Breast epithelium (tissue), 4 donors: ENCODE measurements at regions of chr1 and their contacts with region 1.

Region 1: GRCh38 chr1:174883409-174883808 is 116.3 kb upstream of the CACYBP start:
- DNase-seq: no peak
- H3K4me3 ChIP-seq: no peak overlapping the region
- H3K27ac ChIP-seq: no peak overlapping the region
- H3K4me1 ChIP-seq: no peaks in the 10 kb centered on the region
- H3K27me3 ChIP-seq: no peaks in the 10 kb centered on the region
- CTCF ChIP-seq: no peak
- POLR2A ChIP-seq: no peak

Region 2: DNA sequence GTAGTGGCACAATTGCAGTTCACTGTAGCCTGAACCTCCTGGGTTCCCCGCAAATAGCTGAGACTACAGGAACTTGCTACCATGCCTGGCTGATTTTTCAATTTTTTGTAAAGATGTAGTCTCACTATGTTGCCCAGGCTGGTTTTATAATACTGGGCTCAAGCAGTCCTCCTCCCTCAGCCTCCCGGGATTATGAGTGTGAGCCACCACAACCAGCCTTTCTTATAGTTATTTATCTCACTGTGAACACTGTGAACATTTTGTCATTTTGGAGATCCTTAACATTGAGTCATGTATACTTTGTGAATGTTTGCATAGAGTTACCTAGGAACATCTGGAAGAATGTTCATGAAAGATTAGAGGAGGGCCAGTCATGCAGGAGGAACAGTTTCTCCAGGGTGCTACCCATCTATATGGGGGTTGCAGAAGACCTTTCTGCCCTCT is 10.8 kb before region 1 on chr1:
- intact Hi-C with region 1: no loop called
- DNase-seq: no peak
- H3K4me3 ChIP-seq: no peak overlapping the region
- H3K27ac ChIP-seq: peak overlapping the region in 1 of 2 donors; percentile 43
- H3K4me1 ChIP-seq: peaks cover 0 to 3% of the 10 kb centered on the region in 2 donors
- H3K27me3 ChIP-seq: no peaks in the 10 kb centered on the region
- CTCF ChIP-seq: no peak
- POLR2A ChIP-seq: no peak

Region 3: GRCh38 chr1:174902531-174903099 is 19.2 kb after region 1 on chr1:
- intact Hi-C with region 1: loop called (anchors 1 kb)
- DNase-seq: peak in 1 of 2 donors; percentile 37
- H3K4me3 ChIP-seq: no peak overlapping the region
- H3K27ac ChIP-seq: peak overlapping the region in 1 of 2 donors; percentile 50
- H3K4me1 ChIP-seq: no peaks in the 10 kb centered on the region
- H3K27me3 ChIP-seq: no peaks in the 10 kb centered on the region
- CTCF ChIP-seq: no peak
- POLR2A ChIP-seq: no peak

Region 4: DNA sequence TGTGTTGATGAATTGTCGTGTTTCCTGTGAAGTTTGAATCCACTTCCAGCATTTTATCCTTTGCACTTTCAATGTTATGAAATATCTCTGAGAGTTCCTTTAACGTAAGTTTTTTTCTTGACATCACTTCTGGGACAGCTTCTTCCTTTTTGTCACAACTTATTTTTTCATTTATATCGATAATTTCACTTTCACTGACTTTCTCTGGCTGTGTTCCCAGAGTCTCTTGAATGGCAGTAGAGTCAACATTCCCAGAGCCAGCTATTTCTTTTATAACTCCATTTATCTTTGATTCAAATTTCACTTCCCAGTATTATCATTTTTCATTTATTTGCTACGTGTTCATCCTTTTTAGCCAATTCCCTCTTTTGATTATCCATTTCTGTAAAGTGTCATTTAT is 1836.0 kb after region 1 on chr1:
- intact Hi-C with region 1: no loop called
- DNase-seq: no peak
- H3K4me3 ChIP-seq: no peak overlapping the region
- H3K27ac ChIP-seq: no peak overlapping the region
- H3K4me1 ChIP-seq: no peaks in the 10 kb centered on the region
- H3K27me3 ChIP-seq: no peaks in the 10 kb centered on the region
- CTCF ChIP-seq: no peak
- POLR2A ChIP-seq: no peak